CD8-positive, alpha-beta T cell (primary cell): ENCODE measurements at regions of chr13 and their contacts with region 1.

Region 1: DNA sequence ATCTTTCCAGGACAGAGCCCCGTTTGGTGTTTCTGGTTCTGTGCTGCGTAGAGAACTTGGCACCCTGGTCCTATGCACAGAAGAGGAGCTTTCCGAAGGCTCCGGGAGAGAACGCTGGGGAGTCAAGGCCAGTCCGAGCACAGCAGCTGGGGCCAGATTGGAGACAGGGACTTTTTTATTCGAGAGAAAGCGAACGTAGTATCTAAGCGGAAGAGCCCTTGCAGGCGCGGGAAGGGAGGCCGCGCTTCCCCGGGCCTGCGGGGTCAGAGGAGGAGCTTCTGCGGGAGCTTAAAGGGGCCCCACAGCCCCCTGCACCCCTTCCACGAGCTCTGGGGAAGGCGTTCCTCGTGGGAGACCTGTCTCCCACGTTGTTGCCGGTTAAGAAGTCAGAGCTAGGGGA is 48.6 kb upstream of the ARHGEF7 start:
- DNase-seq: no peak
- ATAC-seq: no peak
- H3K4me3 ChIP-seq: no peak overlapping the region
- H3K4me3 Mint-ChIP-seq: peak overlapping the region; percentile 65
- H3K27ac ChIP-seq: no peak overlapping the region
- H3K27ac Mint-ChIP-seq: no peak overlapping the region
- H3K4me1 ChIP-seq: peaks cover 6% of the 10 kb centered on the region
- H3K4me1 Mint-ChIP-seq: peaks cover 7% of the 10 kb centered on the region
- H3K27me3 ChIP-seq: peaks cover 4 to 6% of the 10 kb centered on the region in 2 experiments
- H3K27me3 Mint-ChIP-seq: peaks cover 46% of the 10 kb centered on the region
- CTCF ChIP-seq: no peak

Region 2: DNA sequence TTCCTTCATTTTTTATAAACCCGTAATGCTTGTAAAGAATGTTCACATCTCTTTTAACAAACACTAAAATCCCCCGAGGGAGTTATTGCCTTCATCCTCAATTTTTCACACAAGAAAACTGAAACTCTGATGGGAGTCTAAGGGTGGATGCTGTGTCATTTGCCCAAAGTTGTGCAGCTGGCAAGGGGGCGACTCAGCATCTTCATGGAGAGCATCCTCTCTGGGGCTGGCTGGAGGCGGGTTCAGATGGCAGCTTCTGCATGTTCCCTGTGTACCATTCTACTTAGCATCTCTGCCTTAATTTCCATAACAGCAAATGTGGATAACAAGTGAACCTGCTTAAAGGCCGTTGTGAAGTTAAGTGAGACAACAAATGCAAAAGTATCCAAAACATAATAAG is 1536.6 kb before region 1 on chr13:
- CTCF ChIA-PET with region 1: no interaction called
- POLR2A ChIA-PET with region 1: no interaction called
- intact Hi-C with region 1: no loop called
- DNase-seq: no peak
- ATAC-seq: no peak
- H3K4me3 ChIP-seq: no peak overlapping the region
- H3K4me3 Mint-ChIP-seq: no peak overlapping the region
- H3K27ac ChIP-seq: no peak overlapping the region
- H3K27ac Mint-ChIP-seq: no peak overlapping the region
- H3K4me1 ChIP-seq: no peaks in the 10 kb centered on the region
- H3K4me1 Mint-ChIP-seq: no peaks in the 10 kb centered on the region
- H3K27me3 ChIP-seq: no peaks in the 10 kb centered on the region
- H3K27me3 Mint-ChIP-seq: peaks cover 9% of the 10 kb centered on the region
- CTCF ChIP-seq: no peak

Region 3: DNA sequence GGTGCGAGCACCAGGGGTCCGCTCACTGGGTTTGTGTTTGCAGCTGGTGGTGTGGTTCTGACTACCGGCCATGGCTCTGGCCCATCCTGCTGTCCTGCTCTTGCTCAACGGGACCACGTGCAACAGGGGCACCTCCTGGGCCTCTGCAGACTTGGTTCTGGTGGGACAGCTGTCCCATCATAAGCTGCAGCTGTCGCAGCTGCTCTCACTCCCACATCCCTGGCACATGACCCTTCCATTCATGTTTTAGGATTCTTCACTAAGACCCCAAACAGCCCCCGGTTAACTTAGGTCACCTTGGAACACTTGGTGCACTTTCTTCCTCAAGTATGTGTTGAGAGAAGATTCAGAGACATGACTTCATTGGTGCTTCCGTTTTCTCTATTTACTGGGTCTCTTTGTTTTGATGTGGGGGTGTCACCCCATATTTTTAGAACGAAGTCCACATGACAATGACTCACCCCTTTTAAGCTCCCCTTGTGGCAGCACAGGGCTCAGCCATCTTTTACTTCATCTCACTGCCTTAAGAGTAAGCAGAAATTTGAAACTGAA is 19.9 kb before region 1 on chr13:
- CTCF ChIA-PET with region 1: interaction called, 10 read pairs
- POLR2A ChIA-PET with region 1: no interaction called
- intact Hi-C with region 1: no loop called
- DNase-seq: peak in 1 of 9 experiments; percentile 22
- ATAC-seq: peak; percentile 77
- H3K4me3 ChIP-seq: no peak overlapping the region
- H3K4me3 Mint-ChIP-seq: no peak overlapping the region
- H3K27ac ChIP-seq: no peak overlapping the region
- H3K27ac Mint-ChIP-seq: no peak overlapping the region
- H3K4me1 ChIP-seq: no peaks in the 10 kb centered on the region
- H3K4me1 Mint-ChIP-seq: peaks cover 6% of the 10 kb centered on the region
- H3K27me3 ChIP-seq: no peaks in the 10 kb centered on the region
- H3K27me3 Mint-ChIP-seq: peaks cover 12% of the 10 kb centered on the region
- CTCF ChIP-seq: no peak

Region 4: DNA sequence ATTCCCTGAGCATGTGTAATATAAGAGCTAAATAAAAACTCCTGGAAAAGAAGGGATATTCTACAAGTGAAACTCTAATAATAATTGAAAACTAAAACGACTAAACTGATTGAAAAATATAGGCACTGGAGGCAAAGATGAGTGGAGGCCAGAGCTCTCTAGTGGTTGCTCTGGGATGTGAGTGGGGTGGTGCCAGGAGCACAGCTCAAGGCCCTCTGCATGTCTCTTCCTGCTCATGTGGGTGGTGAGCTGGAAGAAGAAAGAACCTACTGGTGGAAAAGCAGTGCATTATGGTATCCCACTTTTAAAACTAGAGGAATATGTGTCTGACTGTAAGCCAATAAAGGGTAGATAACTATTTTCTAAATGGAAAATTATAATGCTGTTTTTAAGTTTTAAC is 32.7 kb after region 1 on chr13:
- CTCF ChIA-PET with region 1: no interaction called
- POLR2A ChIA-PET with region 1: no interaction called
- intact Hi-C with region 1: no loop called
- DNase-seq: no peak
- ATAC-seq: no peak
- H3K4me3 ChIP-seq: no peak overlapping the region
- H3K4me3 Mint-ChIP-seq: no peak overlapping the region
- H3K27ac ChIP-seq: no peak overlapping the region
- H3K27ac Mint-ChIP-seq: no peak overlapping the region
- H3K4me1 ChIP-seq: no peaks in the 10 kb centered on the region
- H3K4me1 Mint-ChIP-seq: no peaks in the 10 kb centered on the region
- H3K27me3 ChIP-seq: peaks cover 2 to 7% of the 10 kb centered on the region in 2 experiments
- H3K27me3 Mint-ChIP-seq: peaks cover 58% of the 10 kb centered on the region
- CTCF ChIP-seq: no peak

Region 5: GRCh38 chr13:111153279-111153976 is 86.9 kb after region 1 on chr13:
- CTCF ChIA-PET with region 1: interaction called, 5 read pairs
- POLR2A ChIA-PET with region 1: no interaction called
- intact Hi-C with region 1: loop called (anchors 2 to 5 kb)
- DNase-seq: peak; percentile 86 to 96 (median 94)
- ATAC-seq: peak; percentile 81
- H3K4me3 ChIP-seq: peak overlapping the region; percentile 67 to 96
- H3K4me3 Mint-ChIP-seq: peak overlapping the region; percentile 96
- H3K27ac ChIP-seq: peak overlapping the region; percentile 75 to 79
- H3K27ac Mint-ChIP-seq: peak overlapping the region; percentile 96
- H3K4me1 ChIP-seq: peaks cover 20% of the 10 kb centered on the region
- H3K4me1 Mint-ChIP-seq: peaks cover 34% of the 10 kb centered on the region
- H3K27me3 ChIP-seq: no peaks in the 10 kb centered on the region
- H3K27me3 Mint-ChIP-seq: no peaks in the 10 kb centered on the region
- CTCF ChIP-seq: no peak

Region 6: DNA sequence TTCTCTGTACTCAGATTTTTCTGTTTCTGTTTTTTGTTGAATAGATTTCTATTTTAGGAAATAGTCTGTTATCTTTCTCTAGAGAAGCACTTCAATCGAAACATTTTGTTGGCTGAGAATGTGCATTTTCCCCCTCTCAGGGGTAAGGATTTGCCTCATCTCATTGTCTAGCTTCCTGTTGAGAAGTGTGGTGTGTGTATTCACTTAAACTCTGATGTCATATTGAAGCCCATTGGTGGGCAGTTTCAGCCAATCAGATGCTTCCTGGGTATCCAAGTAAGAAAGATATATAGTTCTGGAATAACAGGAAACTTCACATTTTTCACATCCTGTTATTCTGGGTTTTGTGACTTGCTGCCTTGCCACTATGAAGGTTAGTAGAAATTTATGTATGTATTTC is 136.2 kb after region 1 on chr13:
- CTCF ChIA-PET with region 1: interaction called, 14 read pairs
- POLR2A ChIA-PET with region 1: interaction called, 4 read pairs
- intact Hi-C with region 1: no loop called
- DNase-seq: peak in 3 of 9 experiments; percentile 29 to 65 (median 45)
- ATAC-seq: peak; percentile 86
- H3K4me3 ChIP-seq: no peak overlapping the region
- H3K4me3 Mint-ChIP-seq: no peak overlapping the region
- H3K27ac ChIP-seq: no peak overlapping the region
- H3K27ac Mint-ChIP-seq: peak overlapping the region; percentile 20
- H3K4me1 ChIP-seq: peaks cover 46% of the 10 kb centered on the region
- H3K4me1 Mint-ChIP-seq: peaks cover 79% of the 10 kb centered on the region
- H3K27me3 ChIP-seq: no peaks in the 10 kb centered on the region
- H3K27me3 Mint-ChIP-seq: no peaks in the 10 kb centered on the region
- CTCF ChIP-seq: no peak

Region 7: GRCh38 chr13:111216166-111216960 is 149.8 kb after region 1 on chr13:
- CTCF ChIA-PET with region 1: interaction called, 127 read pairs
- POLR2A ChIA-PET with region 1: interaction called, 3 read pairs
- intact Hi-C with region 1: loop called in 1 of 2 experiments (anchors 1 kb)
- DNase-seq: peak; percentile 18 to 69 (median 46)
- ATAC-seq: peak; percentile 68
- H3K4me3 ChIP-seq: no peak overlapping the region
- H3K4me3 Mint-ChIP-seq: no peak overlapping the region
- H3K27ac ChIP-seq: no peak overlapping the region
- H3K27ac Mint-ChIP-seq: peak overlapping the region; percentile 60
- H3K4me1 ChIP-seq: no peaks in the 10 kb centered on the region
- H3K4me1 Mint-ChIP-seq: peaks cover 53% of the 10 kb centered on the region
- H3K27me3 ChIP-seq: no peaks in the 10 kb centered on the region
- H3K27me3 Mint-ChIP-seq: no peaks in the 10 kb centered on the region
- CTCF ChIP-seq: peak; percentile 39

Region 8: DNA sequence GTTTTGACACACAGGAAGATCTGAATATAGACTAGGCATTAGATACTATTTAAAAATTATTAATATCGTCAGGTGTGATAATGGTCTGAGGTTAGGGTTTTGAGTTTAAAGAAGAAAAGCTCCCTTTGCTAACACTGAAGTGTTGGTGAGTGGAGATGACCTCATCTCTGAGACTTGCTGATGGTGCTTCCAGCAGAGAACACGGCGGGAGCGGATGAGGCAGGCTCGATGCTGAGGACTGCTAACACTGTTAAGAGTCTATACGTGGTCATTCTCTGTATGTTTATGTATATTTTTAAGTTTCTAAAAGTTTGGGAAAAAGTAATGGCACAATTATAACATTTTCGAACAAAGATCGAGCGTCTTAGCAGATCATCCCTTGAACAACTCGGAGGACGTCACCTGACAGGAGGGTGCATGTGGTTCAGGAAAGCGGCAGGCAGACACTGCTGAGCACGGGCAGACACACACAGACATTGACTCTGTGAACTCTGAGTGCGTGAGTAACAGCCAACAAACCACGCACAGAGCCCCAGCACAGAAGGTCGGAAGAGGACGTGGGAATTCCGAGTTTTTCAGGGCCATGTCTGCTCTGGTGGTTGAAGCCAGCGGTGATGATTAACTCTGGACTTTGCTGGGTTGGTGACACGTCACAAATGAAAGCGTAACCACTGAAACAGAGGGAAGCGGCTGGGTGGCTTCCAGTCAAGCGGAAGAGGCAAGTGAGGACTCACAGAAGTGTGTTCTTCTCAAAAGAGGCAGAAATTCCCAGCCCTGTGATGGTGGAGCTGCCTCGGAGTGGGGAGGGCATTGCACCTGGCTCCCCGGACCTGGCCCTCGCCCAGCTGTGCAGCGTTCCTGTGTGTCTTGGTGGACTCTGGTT is 162.0 kb after region 1 on chr13:
- CTCF ChIA-PET with region 1: interaction called, 51 read pairs
- POLR2A ChIA-PET with region 1: interaction called, 3 read pairs
- intact Hi-C with region 1: loop called (anchors 1 kb)
- DNase-seq: no peak
- ATAC-seq: no peak
- H3K4me3 ChIP-seq: no peak overlapping the region
- H3K4me3 Mint-ChIP-seq: no peak overlapping the region
- H3K27ac ChIP-seq: no peak overlapping the region
- H3K27ac Mint-ChIP-seq: no peak overlapping the region
- H3K4me1 ChIP-seq: peaks cover 9% of the 10 kb centered on the region
- H3K4me1 Mint-ChIP-seq: peaks cover 46% of the 10 kb centered on the region
- H3K27me3 ChIP-seq: no peaks in the 10 kb centered on the region
- H3K27me3 Mint-ChIP-seq: no peaks in the 10 kb centered on the region
- CTCF ChIP-seq: no peak

Region 9: DNA sequence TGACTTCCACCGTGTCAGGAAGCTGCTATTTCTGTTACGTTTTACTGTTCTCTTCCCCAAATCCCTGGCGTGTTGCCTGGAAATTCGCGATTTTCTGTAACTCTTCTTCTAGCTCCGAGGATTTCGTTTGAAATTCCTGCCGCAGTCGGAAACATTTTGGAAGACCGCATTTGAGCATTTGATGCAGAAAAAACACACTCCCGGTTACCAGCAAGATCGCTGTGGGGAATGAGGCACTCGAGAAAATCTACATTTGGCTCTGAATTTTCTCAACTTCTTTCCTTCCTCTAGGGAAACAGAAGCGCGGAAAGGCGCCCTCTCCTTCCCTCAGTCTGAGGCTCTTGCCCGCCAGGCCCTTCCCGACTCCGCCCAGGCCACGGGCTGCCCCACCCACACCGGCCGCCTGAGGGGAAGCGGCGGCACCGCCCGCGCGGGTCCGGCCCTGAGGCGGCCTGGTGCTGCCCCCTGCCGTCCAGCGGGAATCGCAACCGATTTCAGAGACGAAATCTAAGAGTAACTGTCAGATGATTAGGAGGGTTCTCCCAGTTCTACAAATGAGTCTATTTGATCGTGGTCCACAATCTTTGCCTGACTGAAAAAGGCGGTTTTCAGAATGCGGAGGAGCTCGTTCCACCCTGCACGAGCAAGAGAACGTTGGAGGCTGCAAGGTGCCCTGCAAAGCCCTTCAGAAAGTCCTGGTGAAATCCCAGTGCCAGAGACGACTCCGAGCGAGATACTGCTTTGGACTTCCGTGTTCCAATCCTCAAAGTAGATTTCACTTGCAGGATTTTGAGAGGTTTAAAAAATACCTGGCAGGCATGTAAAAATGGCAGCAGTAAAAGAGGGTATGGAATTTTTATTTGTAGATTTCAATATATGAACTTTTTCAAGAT is 1539.8 kb after region 1 on chr13:
- CTCF ChIA-PET with region 1: no interaction called
- POLR2A ChIA-PET with region 1: no interaction called
- intact Hi-C with region 1: loop called in 1 of 2 experiments (anchors 5 kb)
- DNase-seq: peak; percentile 70 to 91 (median 84)
- ATAC-seq: peak; percentile 99
- H3K4me3 ChIP-seq: peak overlapping the region; percentile 49 to 53
- H3K4me3 Mint-ChIP-seq: peak overlapping the region; percentile 86
- H3K27ac ChIP-seq: no peak overlapping the region
- H3K27ac Mint-ChIP-seq: no peak overlapping the region
- H3K4me1 ChIP-seq: no peaks in the 10 kb centered on the region
- H3K4me1 Mint-ChIP-seq: peaks cover 8% of the 10 kb centered on the region
- H3K27me3 ChIP-seq: peaks cover 0 to 4% of the 10 kb centered on the region in 2 experiments
- H3K27me3 Mint-ChIP-seq: peaks cover 11% of the 10 kb centered on the region
- CTCF ChIP-seq: peak; percentile 97